Endothelial cell of umbilical vein (primary cell): ENCODE measurements at regions of chr3 and their contacts with region 1.

Region 1: DNA sequence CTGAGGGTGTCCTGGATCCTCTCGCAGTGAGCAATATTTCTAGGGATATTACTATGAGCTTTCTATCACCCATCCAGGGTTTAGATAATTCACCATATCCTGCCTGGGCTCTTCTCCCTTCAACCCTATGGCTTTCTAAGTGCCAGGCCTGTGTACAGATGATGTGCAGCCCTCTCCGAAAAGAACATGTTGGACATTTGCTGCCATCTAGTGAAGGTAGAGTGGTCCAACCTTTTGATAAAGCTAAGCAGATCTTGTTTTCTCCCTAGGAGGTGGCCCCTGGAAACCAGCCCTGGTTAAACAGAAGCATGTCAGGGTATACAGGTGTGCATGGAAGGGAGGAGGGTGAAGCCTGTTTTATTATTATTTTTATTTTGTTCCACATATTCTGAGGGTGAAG is 27.9 kb upstream of the SCN10A start:
- DNase-seq: peak; percentile 71
- H3K4me3 ChIP-seq: no peak overlapping the region
- H3K27ac ChIP-seq: no peak overlapping the region
- H3K4me1 ChIP-seq: no peaks in the 10 kb centered on the region
- H3K27me3 ChIP-seq: peaks cover 0 to 5% of the 10 kb centered on the region in 2 experiments
- CTCF ChIP-seq: peak; percentile 52 to 56
- POLR2A ChIP-seq: no peak

Region 2: DNA sequence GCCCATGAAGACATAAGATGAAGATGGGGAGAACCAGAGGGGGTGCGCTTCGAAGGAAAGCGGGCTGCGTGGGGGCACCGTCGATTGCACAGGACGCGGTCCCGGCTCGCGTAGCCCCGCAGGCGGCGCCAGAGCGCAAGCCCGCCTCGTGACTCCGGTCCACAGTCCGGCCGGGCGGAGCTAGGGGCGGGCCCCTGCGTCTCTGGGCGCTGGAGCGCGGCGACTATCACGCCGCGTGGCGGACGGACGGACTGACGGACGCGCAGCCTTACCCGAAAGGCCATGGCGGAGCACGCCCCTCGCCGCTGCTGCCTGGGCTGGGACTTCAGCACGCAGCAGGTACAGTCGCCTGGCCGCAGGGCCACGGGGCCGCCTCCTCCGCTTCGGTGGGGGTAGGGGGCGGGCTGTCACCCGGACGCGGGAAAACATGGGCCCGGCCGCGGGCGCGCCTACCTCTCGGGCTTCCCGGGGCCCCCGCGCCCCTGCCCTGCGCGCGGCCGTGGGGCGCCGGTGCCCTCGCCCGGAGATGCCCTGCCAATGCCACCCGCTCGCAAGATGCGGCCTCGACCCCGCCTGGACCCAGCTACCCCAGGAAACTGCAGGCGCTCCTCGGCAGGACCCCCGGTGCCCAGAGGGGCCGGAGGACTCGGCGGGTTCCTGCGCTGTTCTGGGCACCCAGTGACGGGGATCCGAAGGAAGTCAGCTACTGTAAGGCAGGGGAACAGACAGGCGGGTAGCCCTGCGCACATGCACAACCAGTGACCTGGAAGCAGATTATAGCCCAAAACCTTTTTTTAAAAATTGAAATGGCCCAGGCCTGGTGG is 497.1 kb before region 1 on chr3 and contains the start of gene XYLB:
- CTCF ChIA-PET with region 1: no interaction called
- POLR2A ChIA-PET with region 1: no interaction called
- dilution Hi-C with region 1: no loop called
- intact Hi-C with region 1: loop called (anchors 10 kb)
- DNase-seq: peak; percentile 81
- H3K4me3 ChIP-seq: peak within 1 kb of the TSS; percentile 53 to 96 (median 58)
- H3K27ac ChIP-seq: no peak within 1 kb of the TSS
- H3K4me1 ChIP-seq: no peaks in the 10 kb centered on the region
- H3K27me3 ChIP-seq: no peaks in the 10 kb centered on the region
- CTCF ChIP-seq: peak; percentile 81 to 95
- POLR2A ChIP-seq: peak; percentile 28
- total RNA-seq, gene XYLB: 4.3 and 6.1 TPM in 2 replicates

Region 3: GRCh38 chr3:38521391-38521987 is 322.4 kb before region 1 on chr3:
- CTCF ChIA-PET with region 1: interaction called, 124 read pairs
- POLR2A ChIA-PET with region 1: no interaction called
- dilution Hi-C with region 1: no loop called
- intact Hi-C with region 1: loop called (anchors 1 kb)
- DNase-seq: peak; percentile 81
- H3K4me3 ChIP-seq: no peak overlapping the region
- H3K27ac ChIP-seq: no peak overlapping the region
- H3K4me1 ChIP-seq: peaks cover 4% of the 10 kb centered on the region
- H3K27me3 ChIP-seq: no peaks in the 10 kb centered on the region
- CTCF ChIP-seq: peak; percentile 84
- POLR2A ChIP-seq: no peak

Region 4: GRCh38 chr3:38627956-38628355 is 215.9 kb before region 1 on chr3:
- CTCF ChIA-PET with region 1: interaction called, 4 read pairs
- POLR2A ChIA-PET with region 1: no interaction called
- dilution Hi-C with region 1: no loop called
- intact Hi-C with region 1: loop called (anchors 1 kb)
- DNase-seq: peak; percentile 32
- H3K4me3 ChIP-seq: no peak overlapping the region
- H3K27ac ChIP-seq: no peak overlapping the region
- H3K4me1 ChIP-seq: no peaks in the 10 kb centered on the region
- H3K27me3 ChIP-seq: no peaks in the 10 kb centered on the region
- CTCF ChIP-seq: peak; percentile 71 to 73
- POLR2A ChIP-seq: no peak

Region 5: DNA sequence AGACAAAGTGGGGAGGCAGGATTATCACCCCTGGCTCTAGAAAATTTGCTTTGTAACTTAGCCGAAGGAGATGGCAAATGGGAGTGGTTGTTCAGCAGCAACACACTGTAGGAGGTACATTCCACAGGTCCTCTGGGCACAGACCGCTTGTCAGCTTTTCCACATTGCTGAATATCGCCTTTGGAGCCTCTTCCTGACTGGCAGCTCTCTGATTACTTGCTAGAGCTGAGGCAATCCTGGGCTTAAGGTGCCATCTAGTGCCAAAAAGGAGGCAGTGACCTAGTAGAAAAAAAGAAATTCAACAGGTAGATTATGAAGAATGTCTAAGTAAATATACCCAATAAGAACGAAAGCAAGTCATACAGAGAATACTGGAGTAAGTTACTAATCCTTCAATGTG is 181.4 kb before region 1 on chr3:
- CTCF ChIA-PET with region 1: interaction called, 26 read pairs
- POLR2A ChIA-PET with region 1: no interaction called
- dilution Hi-C with region 1: no loop called
- intact Hi-C with region 1: loop called (anchors 1 kb)
- DNase-seq: peak; percentile 58
- H3K4me3 ChIP-seq: no peak overlapping the region
- H3K27ac ChIP-seq: no peak overlapping the region
- H3K4me1 ChIP-seq: no peaks in the 10 kb centered on the region
- H3K27me3 ChIP-seq: peaks cover 16 to 19% of the 10 kb centered on the region in 2 experiments
- CTCF ChIP-seq: peak; percentile 41 to 52
- POLR2A ChIP-seq: no peak

Region 6: GRCh38 chr3:38689774-38690173 is 154.1 kb before region 1 on chr3:
- CTCF ChIA-PET with region 1: interaction called, 42 read pairs
- POLR2A ChIA-PET with region 1: no interaction called
- dilution Hi-C with region 1: no loop called
- intact Hi-C with region 1: loop called (anchors 1 kb)
- DNase-seq: peak; percentile 13
- H3K4me3 ChIP-seq: no peak overlapping the region
- H3K27ac ChIP-seq: no peak overlapping the region
- H3K4me1 ChIP-seq: no peaks in the 10 kb centered on the region
- H3K27me3 ChIP-seq: no peaks in the 10 kb centered on the region
- CTCF ChIP-seq: no peak
- POLR2A ChIP-seq: no peak

Region 7: DNA sequence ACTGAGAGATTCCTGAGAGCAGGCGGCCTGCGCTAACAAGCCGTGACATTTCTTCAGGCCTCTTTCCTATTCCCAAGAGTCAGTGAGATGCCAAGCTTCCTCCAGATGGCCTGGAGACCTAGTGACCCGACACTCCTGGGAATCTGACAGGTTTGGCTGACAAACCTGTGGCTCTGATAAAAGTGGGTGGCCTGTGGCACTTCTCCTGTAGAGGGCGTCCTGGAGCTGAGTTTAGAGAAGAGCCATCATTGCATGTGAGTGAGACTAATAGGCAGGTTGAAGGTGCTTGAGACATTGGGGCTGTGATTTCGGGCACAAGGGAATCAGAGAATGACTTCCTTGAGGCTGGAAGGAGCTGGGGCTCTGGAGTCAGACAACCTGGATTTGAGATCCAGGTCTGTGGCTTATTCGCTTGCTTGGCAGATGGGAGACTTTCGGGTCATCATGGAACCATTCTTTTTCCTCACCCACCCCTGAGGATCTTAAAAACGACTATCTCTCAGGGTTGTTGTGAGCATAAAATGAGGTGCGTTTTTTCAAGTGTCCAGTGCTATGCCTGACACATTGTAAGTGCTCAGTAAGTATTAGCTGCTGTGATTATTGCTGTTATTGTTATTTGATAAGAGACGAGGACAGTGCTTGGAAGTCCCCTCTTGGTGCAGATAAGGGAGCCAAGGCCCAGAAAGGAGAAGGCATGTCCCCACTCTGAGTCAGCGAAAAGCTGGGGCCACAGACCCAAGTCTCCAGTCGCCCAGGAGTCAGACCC is 105.1 kb before region 1 on chr3:
- CTCF ChIA-PET with region 1: interaction called, 72 read pairs
- POLR2A ChIA-PET with region 1: no interaction called
- dilution Hi-C with region 1: no loop called
- intact Hi-C with region 1: loop called (anchors 1 kb)
- DNase-seq: peak; percentile 73
- H3K4me3 ChIP-seq: no peak overlapping the region
- H3K27ac ChIP-seq: peak overlapping the region; percentile 10
- H3K4me1 ChIP-seq: peaks cover 3% of the 10 kb centered on the region
- H3K27me3 ChIP-seq: no peaks in the 10 kb centered on the region
- CTCF ChIP-seq: peak; percentile 84 to 89
- POLR2A ChIP-seq: no peak

Region 8: GRCh38 chr3:39075910-39076309 is 232.0 kb after region 1 on chr3:
- CTCF ChIA-PET with region 1: no interaction called
- POLR2A ChIA-PET with region 1: no interaction called
- dilution Hi-C with region 1: no loop called
- intact Hi-C with region 1: no loop called
- DNase-seq: no peak
- H3K4me3 ChIP-seq: no peak overlapping the region
- H3K27ac ChIP-seq: no peak overlapping the region
- H3K4me1 ChIP-seq: peaks cover 6% of the 10 kb centered on the region
- H3K27me3 ChIP-seq: no peaks in the 10 kb centered on the region
- CTCF ChIP-seq: no peak
- POLR2A ChIP-seq: no peak